ENCODE measurements at regions of chr5 and their contacts with region 1.

Region 1: DNA sequence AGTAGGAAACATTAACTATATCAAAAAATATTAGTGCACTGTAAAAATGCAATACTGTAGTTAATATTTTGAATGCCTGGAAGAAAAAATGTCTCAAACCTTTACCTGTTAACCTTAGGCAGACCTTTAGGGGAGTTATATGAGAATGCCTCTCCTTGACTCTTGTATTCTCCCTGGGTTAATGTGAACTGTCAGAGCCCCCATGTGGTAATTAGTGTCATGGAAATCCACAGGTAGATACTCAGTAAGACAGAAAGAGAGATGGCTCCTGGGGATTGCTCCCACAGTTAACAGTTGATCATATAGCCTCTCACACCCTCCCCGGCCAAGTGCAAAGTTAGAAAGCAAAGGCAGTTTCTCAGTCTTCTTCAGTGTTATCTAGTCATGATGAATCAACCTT is 742.8 kb downstream of the NR2F1-AS1 start:
- DNase-seq: no peak
- ATAC-seq: no peak
- H3K4me3 ChIP-seq: no peak overlapping the region
- H3K27ac ChIP-seq: peak overlapping the region; percentile 75; the same call in 1 of the 2 replicates
- H3K4me1 ChIP-seq: peaks cover 9% of the 10 kb centered on the region
- H3K27me3 ChIP-seq: no peaks in the 10 kb centered on the region
- CTCF ChIP-seq: 0 out of 2 replicates have a peak, but pooled peaks have one; percentile 4
- POLR2A ChIP-seq: no peak
- RAD21 ChIP-seq: no peak

Region 2: DNA sequence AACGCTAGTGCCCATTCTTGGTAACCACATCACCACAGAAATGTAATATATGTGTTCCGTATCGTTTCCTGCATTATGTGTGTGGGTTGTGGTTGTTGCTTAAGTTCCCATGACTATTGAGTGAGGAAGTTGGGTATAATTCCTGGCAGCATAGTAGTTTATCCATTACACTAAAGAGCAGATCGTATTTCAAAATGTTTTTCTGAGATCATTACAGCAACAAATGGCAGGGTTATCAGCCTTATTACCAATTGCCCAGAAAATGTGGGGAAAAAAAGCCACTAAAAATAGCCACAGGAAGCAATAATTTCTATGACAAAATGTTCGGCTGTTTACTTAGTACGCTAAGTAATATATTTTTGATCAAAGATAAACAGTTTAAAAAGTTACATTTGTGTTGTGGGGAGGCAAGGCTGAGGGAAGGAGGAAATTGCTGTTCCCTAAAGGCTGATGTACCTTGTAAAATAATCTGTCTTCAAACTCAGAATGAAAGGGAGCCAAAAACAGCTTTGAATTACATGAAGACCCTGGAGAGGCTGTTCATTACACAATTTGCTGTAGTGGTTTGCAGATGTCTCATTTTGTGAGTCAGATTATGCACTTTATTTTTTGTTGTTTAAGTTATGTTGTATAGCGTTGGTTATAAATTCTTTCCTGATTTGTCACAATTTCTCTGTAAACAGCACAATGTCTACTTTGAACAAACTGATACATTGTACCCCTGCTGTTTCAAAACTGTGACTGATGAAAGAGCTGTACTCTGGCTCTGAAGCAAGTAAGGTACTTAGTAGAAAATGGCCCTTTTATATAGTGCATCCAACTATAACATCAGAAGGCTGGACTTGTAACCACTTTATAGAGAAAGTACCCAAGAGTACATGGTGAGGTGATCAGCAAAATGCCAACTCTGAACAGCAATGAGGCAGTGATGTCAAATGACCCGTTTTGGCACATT is 285.8 kb before region 1 on chr5:
- CTCF ChIA-PET with region 1: no interaction called
- POLR2A ChIA-PET with region 1: no interaction called
- dilution Hi-C with region 1: no loop called
- in situ Hi-C with region 1: no loop called
- intact Hi-C with region 1: loop called (anchors 1 kb)
- DNase-seq: peak; percentile 99
- ATAC-seq: peak; percentile 83
- H3K4me3 ChIP-seq: no peak overlapping the region; the same call in 1 of the 2 replicates
- H3K27ac ChIP-seq: peak overlapping the region; percentile 53
- H3K4me1 ChIP-seq: no peaks in the 10 kb centered on the region; the same call in 1 of the 2 replicates
- H3K27me3 ChIP-seq: no peaks in the 10 kb centered on the region
- CTCF ChIP-seq: no peak
- POLR2A ChIP-seq: no peak
- RAD21 ChIP-seq: peak; percentile 24; the same call in 1 of the 2 replicates